ENCODE measurements at regions of chr19 and their contacts with region 1.

Region 1: DNA sequence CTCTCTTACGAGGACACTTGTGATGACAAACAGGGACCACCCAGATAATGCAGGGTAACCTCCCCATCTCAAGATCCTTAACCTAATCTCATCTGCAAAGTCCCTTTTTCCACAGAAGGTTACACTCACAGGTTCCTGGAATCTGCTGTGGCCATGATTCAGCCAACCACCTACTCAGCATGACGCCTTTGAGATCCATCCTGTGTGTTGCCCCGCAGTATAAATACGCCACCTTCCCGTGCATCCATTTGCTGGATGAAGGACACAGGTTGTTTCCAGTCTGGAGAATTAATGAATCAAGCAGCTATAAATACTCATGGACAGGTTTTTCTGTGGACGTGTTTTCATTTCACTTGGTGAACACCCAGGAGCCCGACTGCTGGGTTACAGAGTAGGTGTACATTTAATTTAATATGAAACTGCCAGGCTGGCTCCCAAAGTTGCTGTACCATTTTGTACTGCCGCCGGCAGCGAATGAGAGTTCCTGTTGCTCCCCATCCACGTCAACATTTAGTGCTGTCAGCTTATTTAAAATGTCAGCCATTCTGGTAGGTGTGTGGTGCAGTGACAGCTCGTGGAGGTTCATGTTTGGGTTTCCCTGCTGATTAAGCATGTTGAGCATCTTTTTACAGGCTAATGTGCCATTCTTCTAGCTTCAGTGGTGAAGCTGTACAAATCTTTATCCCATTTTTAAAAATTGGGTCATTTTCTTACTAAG is 40.2 kb downstream of the ELL start:
- DNase-seq: no peak
- ATAC-seq: no peak
- H3K4me3 Mint-ChIP-seq: no peak overlapping the region
- H3K27ac Mint-ChIP-seq: no peak overlapping the region
- H3K4me1 Mint-ChIP-seq: peaks cover 66% of the 10 kb centered on the region
- H3K27me3 Mint-ChIP-seq: no peaks in the 10 kb centered on the region
- CTCF ChIP-seq: no peak

Region 2: DNA sequence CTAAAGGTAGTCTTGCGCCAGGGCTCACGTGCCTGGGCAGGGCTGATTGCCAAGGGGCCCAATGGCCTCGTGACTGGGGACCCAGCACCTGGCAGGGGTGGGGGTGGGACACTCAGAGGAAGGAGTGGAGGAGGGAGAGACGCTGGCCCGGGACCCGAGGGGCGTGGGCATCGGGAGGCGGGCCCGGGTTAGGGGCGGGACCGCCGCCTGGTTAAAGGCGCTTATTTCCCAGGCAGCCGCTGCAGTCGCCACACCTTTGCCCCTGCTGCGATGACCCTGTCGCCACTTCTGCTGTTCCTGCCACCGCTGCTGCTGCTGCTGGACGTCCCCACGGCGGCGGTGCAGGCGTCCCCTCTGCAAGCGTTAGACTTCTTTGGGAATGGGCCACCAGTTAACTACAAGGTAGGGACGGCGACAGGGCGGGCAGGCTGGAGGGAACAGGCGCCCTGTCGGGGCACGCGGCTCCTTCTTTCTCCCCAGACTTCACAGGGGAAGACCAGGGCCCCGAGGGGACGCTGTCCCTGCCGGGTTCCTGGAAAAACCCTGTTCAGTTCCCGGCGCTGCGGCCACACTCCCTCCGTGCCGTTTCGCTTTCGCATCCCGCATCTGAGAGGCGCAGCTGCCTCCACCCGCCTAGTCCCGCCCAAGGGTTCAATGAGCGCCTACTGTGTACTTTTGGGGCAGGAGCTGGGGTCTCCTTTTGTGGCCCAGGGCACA is 307.9 kb before region 1 on chr19 and contains the start of gene IFI30:
- CTCF ChIA-PET with region 1: no interaction called
- POLR2A ChIA-PET with region 1: interaction called, 14 read pairs
- intact Hi-C with region 1: no loop called
- DNase-seq: peak; percentile 85
- ATAC-seq: peak; percentile 62
- H3K4me3 Mint-ChIP-seq: peak within 1 kb of the TSS; percentile 94
- H3K27ac Mint-ChIP-seq: peak within 1 kb of the TSS; percentile 92
- H3K4me1 Mint-ChIP-seq: peaks cover 90% of the 10 kb centered on the region
- H3K27me3 Mint-ChIP-seq: no peaks in the 10 kb centered on the region
- CTCF ChIP-seq: no peak
- total RNA-seq, gene IFI30: 251 and 255 TPM in 2 replicates

Region 3: DNA sequence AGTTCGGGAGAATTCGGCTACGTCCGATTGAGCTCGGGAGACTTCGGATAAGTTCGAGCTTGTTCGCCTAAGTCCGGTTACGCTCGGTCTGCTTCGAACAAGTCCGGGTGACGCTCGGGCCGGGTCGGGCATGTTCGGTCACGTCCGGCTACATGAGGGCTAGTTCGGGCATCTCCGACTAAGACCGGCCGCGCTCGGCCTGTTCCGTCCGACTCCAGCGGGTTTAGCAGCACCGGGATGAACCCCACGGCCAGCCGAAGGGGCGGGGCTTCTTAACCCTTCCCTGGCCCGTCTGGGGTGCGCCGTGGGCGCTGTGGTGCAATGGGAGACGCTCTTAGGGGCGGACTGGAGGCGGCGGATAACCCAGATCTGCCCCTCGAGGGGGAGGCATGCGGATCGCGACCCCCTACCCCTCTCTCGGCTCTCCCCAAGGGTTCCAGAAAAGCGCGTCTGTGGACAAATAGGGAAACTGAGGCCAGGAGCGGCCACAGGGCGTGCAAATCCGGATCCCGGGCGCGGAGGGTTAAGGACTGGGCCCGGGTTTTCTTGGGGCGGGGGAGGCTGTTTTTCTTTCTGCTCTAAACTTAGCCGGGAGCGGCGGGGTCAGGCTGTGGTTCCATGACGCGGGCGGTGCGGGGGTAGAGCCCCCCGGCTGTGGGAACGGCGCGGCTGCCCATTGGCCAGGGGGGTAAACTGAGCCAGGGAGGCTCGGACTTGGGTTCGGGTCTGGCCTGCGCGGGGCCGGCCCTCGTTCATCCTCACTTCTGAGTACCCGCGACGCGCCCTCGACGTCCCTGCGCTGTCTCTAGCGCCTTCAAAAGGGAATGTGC is 256.9 kb before region 1 on chr19:
- CTCF ChIA-PET with region 1: no interaction called
- POLR2A ChIA-PET with region 1: no interaction called
- intact Hi-C with region 1: no loop called
- DNase-seq: peak; percentile 77
- ATAC-seq: peak; percentile 98
- H3K4me3 Mint-ChIP-seq: peak overlapping the region; percentile 84
- H3K27ac Mint-ChIP-seq: peak overlapping the region; percentile 35
- H3K4me1 Mint-ChIP-seq: peaks cover 45% of the 10 kb centered on the region
- H3K27me3 Mint-ChIP-seq: peaks cover 55% of the 10 kb centered on the region
- CTCF ChIP-seq: no peak

Region 4: DNA sequence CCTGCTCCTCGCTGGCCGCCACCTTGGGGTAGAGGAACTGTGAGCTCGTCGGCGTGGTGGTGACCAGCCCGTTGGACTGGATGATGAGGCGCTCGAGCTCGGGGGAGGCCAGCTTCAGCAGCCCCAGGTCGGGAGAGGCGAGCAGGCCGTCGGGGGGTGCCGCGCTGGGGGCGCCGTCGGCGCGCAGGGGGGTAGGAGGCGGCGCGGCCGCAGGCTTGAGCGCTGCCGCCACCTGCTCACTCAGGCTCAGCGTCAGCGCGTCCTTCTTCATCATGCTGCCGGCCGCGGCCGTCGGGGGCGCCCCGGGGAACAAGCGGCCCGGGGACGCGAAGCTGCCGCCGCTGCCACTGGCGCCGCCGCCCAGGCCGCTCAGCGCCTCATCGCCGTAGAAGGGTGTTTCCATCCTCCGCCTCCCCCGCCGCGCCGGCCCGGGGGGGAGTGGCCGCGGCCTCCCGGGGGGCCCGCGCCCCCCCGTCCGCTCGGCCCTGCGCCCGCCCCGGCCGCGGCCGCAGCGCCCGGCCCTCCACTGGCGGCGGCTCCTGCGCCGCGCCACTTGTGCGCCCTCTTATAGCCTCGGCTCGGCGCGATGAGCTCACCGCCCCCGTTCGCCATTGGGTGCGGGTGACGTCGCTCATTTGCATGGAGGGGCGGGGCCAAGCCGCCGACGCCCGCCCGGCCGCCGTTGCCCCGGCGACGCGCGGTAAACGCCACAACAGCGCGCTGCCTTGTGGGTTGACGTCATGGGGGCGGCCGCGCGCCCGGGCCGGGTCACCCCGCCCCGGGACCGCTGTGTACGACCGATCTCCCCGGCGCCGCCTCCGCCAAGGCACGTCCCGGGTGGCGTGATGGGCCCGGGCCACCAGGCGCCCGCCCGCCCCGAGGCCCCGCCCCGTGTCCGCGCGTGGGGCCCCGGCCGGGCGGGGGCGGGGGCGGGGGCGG is 200.3 kb before region 1 on chr19 and contains the start of gene JUND:
- CTCF ChIA-PET with region 1: no interaction called
- POLR2A ChIA-PET with region 1: no interaction called
- intact Hi-C with region 1: no loop called
- DNase-seq: peak; percentile 99
- ATAC-seq: peak; percentile 63
- H3K4me3 Mint-ChIP-seq: peak within 1 kb of the TSS; percentile 96
- H3K27ac Mint-ChIP-seq: peak within 1 kb of the TSS; percentile 97
- H3K4me1 Mint-ChIP-seq: peaks cover 48% of the 10 kb centered on the region
- H3K27me3 Mint-ChIP-seq: no peaks in the 10 kb centered on the region
- CTCF ChIP-seq: no peak
- total RNA-seq, gene JUND: 206 and 225 TPM in 2 replicates

Region 5: GRCh38 chr19:18441804-18442788 is 39.6 kb before region 1 on chr19:
- CTCF ChIA-PET with region 1: no interaction called
- POLR2A ChIA-PET with region 1: no interaction called
- intact Hi-C with region 1: no loop called
- DNase-seq: no peak
- ATAC-seq: no peak
- H3K4me3 Mint-ChIP-seq: no peak overlapping the region
- H3K27ac Mint-ChIP-seq: peak overlapping the region; percentile 14
- H3K4me1 Mint-ChIP-seq: peaks cover 18% of the 10 kb centered on the region
- H3K27me3 Mint-ChIP-seq: no peaks in the 10 kb centered on the region
- CTCF ChIP-seq: no peak

Measured in activated B cell treated with CpG ODN at 0.5 μM for 24 hours (primary cell).